ENCODE measurements at regions of chr16 and their contacts with region 1.

Region 1: GRCh38 chr16:80804056-80804450 is 345 bp downstream of the CDYL2 start:
- DNase-seq: peak; percentile 75
- H3K4me3 Mint-ChIP-seq: peak overlapping the region; percentile 96
- H3K27ac Mint-ChIP-seq: peak overlapping the region; percentile 89
- H3K4me1 Mint-ChIP-seq: peaks cover 57% of the 10 kb centered on the region
- H3K27me3 Mint-ChIP-seq: peaks cover 2% of the 10 kb centered on the region

Region 2: DNA sequence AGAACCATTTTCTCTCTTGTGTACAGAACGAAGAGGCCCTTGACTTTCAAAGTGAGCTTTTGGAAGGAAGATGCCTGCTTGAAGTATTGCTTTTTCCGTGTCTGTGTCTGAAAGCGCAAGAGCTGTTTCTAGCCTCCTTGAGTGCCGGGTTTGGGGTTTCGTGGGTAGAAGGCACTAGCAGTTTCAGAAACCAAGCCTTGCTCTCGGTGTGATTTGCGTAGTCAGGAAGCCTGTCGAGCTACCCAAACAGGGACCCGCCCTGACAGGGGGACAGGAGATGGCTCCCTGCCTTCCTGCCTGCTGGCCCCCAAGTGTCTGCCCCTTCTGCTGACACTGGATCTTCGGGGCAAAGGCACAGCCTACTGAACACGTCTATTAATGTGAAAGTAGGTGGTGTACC is 1525.5 kb before region 1 on chr16:
- CTCF ChIA-PET with region 1: no interaction called
- POLR2A ChIA-PET with region 1: no interaction called
- intact Hi-C with region 1: loop called (anchors 10 kb)
- DNase-seq: peak; percentile 83
- H3K4me3 Mint-ChIP-seq: peak overlapping the region; percentile 54
- H3K27ac Mint-ChIP-seq: peak overlapping the region; percentile 83
- H3K4me1 Mint-ChIP-seq: peaks cover 84% of the 10 kb centered on the region
- H3K27me3 Mint-ChIP-seq: peaks cover 2% of the 10 kb centered on the region

Region 3: GRCh38 chr16:80526425-80527061 is 277.5 kb before region 1 on chr16:
- CTCF ChIA-PET with region 1: interaction called, 41 read pairs
- POLR2A ChIA-PET with region 1: no interaction called
- intact Hi-C with region 1: no loop called
- DNase-seq: peak; percentile 63
- H3K4me3 Mint-ChIP-seq: no peak overlapping the region
- H3K27ac Mint-ChIP-seq: no peak overlapping the region
- H3K4me1 Mint-ChIP-seq: no peaks in the 10 kb centered on the region
- H3K27me3 Mint-ChIP-seq: peaks cover 1% of the 10 kb centered on the region

Region 4: GRCh38 chr16:80580109-80580832 is 223.8 kb before region 1 on chr16:
- CTCF ChIA-PET with region 1: interaction called, 4 read pairs
- POLR2A ChIA-PET with region 1: interaction called, 14 read pairs
- intact Hi-C with region 1: loop called (anchors 1 kb)
- DNase-seq: peak; percentile 89
- H3K4me3 Mint-ChIP-seq: peak overlapping the region; percentile 52
- H3K27ac Mint-ChIP-seq: peak overlapping the region; percentile 89
- H3K4me1 Mint-ChIP-seq: peaks cover 52% of the 10 kb centered on the region
- H3K27me3 Mint-ChIP-seq: peaks cover 2% of the 10 kb centered on the region

Region 5: GRCh38 chr16:80746231-80746630 is 57.8 kb before region 1 on chr16:
- CTCF ChIA-PET with region 1: no interaction called
- POLR2A ChIA-PET with region 1: no interaction called
- intact Hi-C with region 1: loop called (anchors 5 kb)
- DNase-seq: no peak
- H3K4me3 Mint-ChIP-seq: no peak overlapping the region
- H3K27ac Mint-ChIP-seq: no peak overlapping the region
- H3K4me1 Mint-ChIP-seq: peaks cover 35% of the 10 kb centered on the region
- H3K27me3 Mint-ChIP-seq: no peaks in the 10 kb centered on the region

Region 6: GRCh38 chr16:81006814-81007696 is 203.0 kb after region 1 on chr16 and contains the starts of genes CENPN and CMC2:
- CTCF ChIA-PET with region 1: interaction called, 3 read pairs
- POLR2A ChIA-PET with region 1: no interaction called
- intact Hi-C with region 1: loop called (anchors 2 kb)
- DNase-seq: peak; percentile 98
- H3K4me3 Mint-ChIP-seq: peak within 1 kb of the TSS; percentile 88
- H3K27ac Mint-ChIP-seq: peak within 1 kb of the TSS; percentile 98
- H3K4me1 Mint-ChIP-seq: peaks cover 41% of the 10 kb centered on the region
- H3K27me3 Mint-ChIP-seq: no peaks in the 10 kb centered on the region
- total RNA-seq, gene CENPN: 71.9 to 76.0 TPM
- total RNA-seq, gene CMC2: 147 to 148 TPM

Measured in activated CD4-positive, alpha-beta memory T cell treated with anti-CD3 and anti-CD28 coated beads for 36 hours (primary cell).